ENCODE measurements at regions of chr4 and their contacts with region 1.

Region 1: GRCh38 chr4:176034499-176034898 is 31.1 kb upstream of the WDR17 start:
- DNase-seq: no peak
- ATAC-seq: no peak
- H3K4me3 ChIP-seq: no peak overlapping the region
- H3K27ac ChIP-seq: no peak overlapping the region
- H3K4me1 ChIP-seq: no peaks in the 10 kb centered on the region
- H3K27me3 ChIP-seq: no peaks in the 10 kb centered on the region
- CTCF ChIP-seq: peak in 9 of 12 donors; percentile 29 to 56 (median 39)
- POLR2A ChIP-seq: no peak

Region 2: DNA sequence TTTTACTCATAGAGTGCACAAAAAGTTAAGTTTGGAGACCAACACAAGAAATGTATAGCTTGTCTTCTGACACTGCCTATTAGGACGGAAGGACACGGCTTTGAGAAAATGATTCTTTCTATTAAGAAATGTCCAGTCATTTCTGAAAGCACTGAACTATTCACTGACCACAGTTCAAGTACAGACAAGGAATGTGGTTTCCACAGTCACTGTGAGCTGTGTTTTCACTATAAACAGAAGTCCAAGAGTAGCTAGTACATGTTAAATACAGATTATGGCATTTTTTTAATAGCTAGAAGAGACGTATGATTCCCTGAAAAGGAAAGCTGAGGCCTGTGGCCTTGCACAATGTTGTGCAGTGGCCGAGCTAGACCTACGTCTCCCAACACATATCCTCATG is 107.4 kb before region 1 on chr4:
- intact Hi-C with region 1: no loop called
- DNase-seq: no peak
- ATAC-seq: no peak
- H3K4me3 ChIP-seq: no peak overlapping the region
- H3K27ac ChIP-seq: no peak overlapping the region
- H3K4me1 ChIP-seq: no peaks in the 10 kb centered on the region
- H3K27me3 ChIP-seq: no peaks in the 10 kb centered on the region
- CTCF ChIP-seq: no peak
- POLR2A ChIP-seq: no peak

Region 3: DNA sequence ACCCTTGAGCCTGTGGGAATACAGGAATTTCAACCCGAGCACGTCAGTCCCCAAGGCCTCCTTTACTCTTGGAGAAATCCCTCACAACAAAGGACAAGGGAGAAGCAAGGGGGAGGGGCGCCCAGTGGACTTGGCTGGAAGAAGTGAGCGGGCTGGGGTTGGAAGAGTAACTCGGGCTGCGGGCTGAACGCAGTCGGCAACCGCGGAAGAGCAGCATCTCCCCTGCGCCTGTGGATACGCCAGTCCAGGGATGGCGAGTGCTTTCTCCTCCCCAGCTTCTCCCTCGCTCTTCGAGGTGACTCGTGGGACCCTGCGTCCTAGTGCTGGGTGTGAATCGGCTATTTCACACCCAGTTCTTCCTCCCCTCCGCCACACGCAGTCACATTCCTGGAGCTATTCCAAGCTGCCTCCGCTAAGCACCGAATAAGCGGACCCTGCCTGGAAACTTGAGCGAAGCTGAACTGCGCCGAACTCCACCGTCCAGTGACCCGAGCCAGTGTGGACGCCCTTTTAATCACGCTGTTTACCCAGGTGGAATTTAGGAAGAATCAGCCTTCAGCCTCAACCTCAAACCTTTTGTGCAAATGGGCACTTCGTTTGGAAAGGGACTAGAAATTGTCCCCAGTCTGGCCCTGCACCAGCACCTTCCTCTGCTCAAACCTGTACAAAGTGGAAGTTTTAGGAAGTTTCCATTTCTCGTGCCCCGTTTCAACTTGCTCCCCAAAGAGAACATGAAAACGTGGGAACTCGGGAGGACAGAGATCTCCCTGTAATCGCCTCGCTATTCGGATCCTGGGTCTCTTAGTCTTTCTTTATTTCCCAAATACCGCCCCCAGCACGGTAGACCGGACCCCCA is 33.1 kb before region 1 on chr4:
- intact Hi-C with region 1: no loop called
- DNase-seq: peak in 4 of 5 donors; percentile 15 to 48 (median 22)
- ATAC-seq: peak in 3 of 4 donors; percentile 22 to 42 (median 29)
- H3K4me3 ChIP-seq: peak overlapping the region; percentile 12 to 61 (median 47)
- H3K27ac ChIP-seq: peak overlapping the region in 1 of 12 donors; percentile 77
- H3K4me1 ChIP-seq: peaks cover 0 to 20% (median 4%) of the 10 kb centered on the region in 12 donors
- H3K27me3 ChIP-seq: peaks cover 3 to 28% (median 16%) of the 10 kb centered on the region in 9 donors
- CTCF ChIP-seq: no peak
- POLR2A ChIP-seq: no peak

Region 4: DNA sequence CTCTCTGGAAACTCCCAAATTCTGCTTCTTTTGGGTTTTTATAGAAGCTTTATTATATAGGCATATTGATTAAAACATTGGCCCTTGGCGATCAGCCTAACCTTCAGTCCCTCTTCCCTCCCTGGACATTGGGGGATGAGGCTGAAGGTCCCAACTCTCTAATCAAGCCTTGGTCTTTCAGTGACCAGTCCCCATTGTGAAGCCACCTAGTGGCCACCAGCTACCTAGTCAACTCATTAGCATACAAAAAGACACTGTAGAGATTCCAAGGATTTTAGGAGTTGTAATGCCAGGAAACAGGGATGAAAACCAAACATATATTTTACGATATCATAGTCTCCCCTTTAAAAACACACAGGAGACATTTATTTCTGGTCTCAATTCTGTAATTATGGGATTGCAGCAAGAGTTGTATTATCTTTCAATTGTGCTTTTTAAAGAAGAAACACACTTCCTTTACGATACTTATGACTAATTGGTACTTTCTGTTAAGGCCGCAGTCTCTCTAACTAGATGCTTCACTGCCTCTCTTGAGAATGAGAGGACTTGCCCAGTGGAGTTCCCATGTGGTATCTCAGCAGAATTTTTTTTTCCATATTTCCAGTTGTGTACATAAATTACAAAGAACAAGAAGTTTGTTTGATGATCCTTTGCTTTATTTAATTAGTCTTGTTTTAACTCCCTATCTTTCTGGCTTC is 89.4 kb after region 1 on chr4:
- intact Hi-C with region 1: loop called in 1 of 10 experiments (anchors 10 kb)
- DNase-seq: peak in 3 of 5 donors; percentile 10 to 25 (median 21)
- ATAC-seq: no peak
- H3K4me3 ChIP-seq: no peak overlapping the region
- H3K27ac ChIP-seq: no peak overlapping the region
- H3K4me1 ChIP-seq: no peaks in the 10 kb centered on the region
- H3K27me3 ChIP-seq: no peaks in the 10 kb centered on the region
- CTCF ChIP-seq: peak; percentile 14 to 60 (median 40)
- POLR2A ChIP-seq: no peak

Region 5: DNA sequence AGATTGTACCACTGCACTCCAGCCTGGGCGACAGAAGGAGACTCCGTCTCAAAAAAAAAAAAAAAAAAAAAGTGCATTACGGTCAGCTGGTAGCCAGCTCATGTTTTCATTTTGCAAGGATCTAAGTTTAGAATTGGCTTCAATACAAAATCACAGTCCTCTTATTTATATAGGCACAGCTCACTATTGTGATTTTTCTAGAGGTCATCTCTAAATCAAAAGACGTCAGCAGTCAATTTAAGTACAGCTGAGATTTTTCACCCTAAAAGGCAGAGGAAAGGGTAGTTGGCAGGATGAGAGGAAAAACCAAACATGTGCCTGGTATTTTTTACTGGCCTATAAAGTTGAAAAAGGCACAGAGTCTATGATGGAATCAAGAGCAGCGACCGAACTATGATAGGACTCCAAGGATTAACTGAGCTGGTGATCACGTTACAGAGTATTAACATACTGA is 203.7 kb after region 1 on chr4:
- intact Hi-C with region 1: no loop called
- DNase-seq: no peak
- ATAC-seq: peak; percentile 74 to 89 (median 82)
- H3K4me3 ChIP-seq: peak overlapping the region in 6 of 12 donors; percentile 6 to 15 (median 8)
- H3K27ac ChIP-seq: peak overlapping the region; percentile 71 to 94 (median 84)
- H3K4me1 ChIP-seq: peaks cover 0 to 25% (median 7%) of the 10 kb centered on the region in 12 donors
- H3K27me3 ChIP-seq: no peaks in the 10 kb centered on the region
- CTCF ChIP-seq: no peak
- POLR2A ChIP-seq: no peak

Region 6: DNA sequence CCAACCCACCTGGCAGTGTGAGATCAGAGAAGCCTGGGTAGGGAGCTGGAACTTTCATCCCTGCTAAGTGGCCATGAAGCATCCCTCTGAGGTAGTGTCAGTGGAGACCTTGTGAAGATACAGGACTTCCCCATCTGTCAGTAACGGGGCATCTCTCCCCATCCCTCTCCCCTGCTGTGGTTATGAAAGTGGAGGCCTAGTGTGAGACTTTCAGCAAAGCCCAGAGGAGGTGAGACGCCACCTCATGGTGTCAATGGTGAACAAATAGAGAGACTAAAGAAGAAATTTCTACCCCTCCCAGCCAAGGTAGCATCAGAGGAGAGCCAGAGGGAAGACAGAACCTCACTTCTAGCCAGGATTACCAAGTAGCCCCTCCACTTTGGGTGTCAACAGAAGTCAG is 608.0 kb after region 1 on chr4:
- intact Hi-C with region 1: no loop called
- DNase-seq: no peak
- ATAC-seq: no peak
- H3K4me3 ChIP-seq: no peak overlapping the region
- H3K27ac ChIP-seq: no peak overlapping the region
- H3K4me1 ChIP-seq: no peaks in the 10 kb centered on the region
- H3K27me3 ChIP-seq: no peaks in the 10 kb centered on the region
- CTCF ChIP-seq: no peak
- POLR2A ChIP-seq: no peak